ENCODE measurements at regions of chr4 and their contacts with region 1.

Region 1: GRCh38 chr4:102826890-102827673 is at the start of gene UBE2D3:
- DNase-seq: peak; percentile 95
- H3K4me3 Mint-ChIP-seq: no peak within 1 kb of the TSS
- H3K27ac Mint-ChIP-seq: no peak within 1 kb of the TSS
- H3K4me1 Mint-ChIP-seq: peaks cover 27% of the 10 kb centered on the region
- H3K27me3 Mint-ChIP-seq: no peaks in the 10 kb centered on the region
- total RNA-seq, gene UBE2D3: 447 to 450 TPM

Region 2: DNA sequence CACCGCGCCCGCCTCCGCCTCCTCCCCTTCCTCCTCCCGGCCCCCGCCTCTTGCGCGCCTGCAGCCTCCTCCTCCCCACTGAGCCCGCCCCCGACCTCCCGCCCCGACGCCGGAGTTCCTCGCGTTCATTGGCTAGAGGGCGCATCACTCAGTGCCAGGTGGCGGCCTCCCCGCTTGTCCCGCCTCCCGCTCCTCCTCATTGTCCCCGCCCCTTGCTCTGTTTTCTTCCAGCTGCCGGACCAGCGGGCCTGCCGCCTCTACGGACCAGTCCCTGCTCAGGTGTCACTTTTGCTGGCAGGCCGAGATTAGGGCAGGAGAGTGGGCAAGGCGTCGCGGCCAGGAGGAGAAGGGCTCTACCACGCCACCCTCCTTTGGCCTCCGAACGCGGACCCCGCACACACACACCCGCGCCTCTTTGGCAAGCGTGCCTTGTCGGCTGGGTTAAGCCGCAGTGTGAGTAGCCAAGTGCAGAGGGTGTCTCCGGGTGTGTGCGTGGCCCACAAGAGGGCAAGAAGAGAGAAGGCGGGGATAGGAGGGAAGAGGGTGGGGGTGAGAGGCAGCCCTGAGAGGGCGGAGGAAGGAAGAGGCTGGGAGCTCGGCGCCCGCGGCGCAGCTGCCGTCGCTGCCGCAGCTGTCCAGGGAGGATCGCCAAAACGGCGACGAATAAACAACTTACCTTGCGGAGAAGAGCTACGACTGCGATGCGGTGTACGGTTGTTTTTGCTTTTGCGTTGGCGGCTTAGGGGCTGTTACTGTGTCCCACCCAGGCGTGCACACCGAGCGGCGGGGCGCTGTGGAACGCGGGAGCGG is 1479.3 kb before region 1 on chr4:
- CTCF ChIA-PET with region 1: no interaction called
- intact Hi-C with region 1: loop called (anchors 5 kb)
- DNase-seq: peak; percentile 99
- H3K4me3 Mint-ChIP-seq: peak overlapping the region; percentile 95
- H3K27ac Mint-ChIP-seq: peak overlapping the region; percentile 82
- H3K4me1 Mint-ChIP-seq: peaks cover 22% of the 10 kb centered on the region
- H3K27me3 Mint-ChIP-seq: peaks cover 31% of the 10 kb centered on the region

Region 3: DNA sequence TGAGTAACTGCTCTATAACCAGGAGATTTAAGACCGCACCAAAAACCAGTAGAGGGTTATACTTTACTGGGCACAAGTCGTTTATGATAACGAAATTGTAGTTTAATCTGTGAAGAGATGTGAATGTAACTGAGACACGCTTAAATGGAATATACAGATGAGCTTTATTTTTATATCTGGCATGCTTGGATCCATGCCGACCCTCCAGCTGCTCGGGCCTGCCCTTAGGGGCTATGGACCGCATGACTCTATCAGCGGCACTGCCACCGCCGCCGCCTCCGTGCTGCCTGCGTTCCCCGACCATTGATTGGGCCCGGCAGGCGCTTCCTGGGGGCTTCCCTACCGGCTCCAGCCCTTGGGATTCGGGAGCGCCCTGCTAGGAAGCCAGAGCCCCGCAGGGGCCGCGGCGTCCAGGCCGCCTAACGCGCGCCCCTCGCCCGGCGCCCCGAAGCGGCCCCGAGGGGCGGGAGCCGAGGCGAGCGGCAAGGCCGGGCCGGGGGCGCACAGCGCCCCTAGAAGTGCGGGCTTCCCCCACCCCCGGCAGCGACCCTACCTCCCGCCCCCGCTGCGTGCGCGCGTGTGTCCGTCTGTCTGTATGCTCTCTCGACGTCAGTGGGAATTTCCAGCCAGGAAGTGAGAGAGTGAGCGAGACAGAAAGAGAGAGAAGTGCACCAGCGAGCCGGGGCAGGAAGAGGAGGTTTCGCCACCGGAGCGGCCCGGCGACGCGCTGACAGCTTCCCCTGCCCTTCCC is 326.2 kb before region 1 on chr4 and contains the start of gene NFKB1:
- CTCF ChIA-PET with region 1: no interaction called
- intact Hi-C with region 1: loop called (anchors 1 kb)
- DNase-seq: peak; percentile 90
- H3K4me3 Mint-ChIP-seq: peak within 1 kb of the TSS; percentile 96
- H3K27ac Mint-ChIP-seq: peak within 1 kb of the TSS; percentile 96
- H3K4me1 Mint-ChIP-seq: peaks cover 16% of the 10 kb centered on the region
- H3K27me3 Mint-ChIP-seq: no peaks in the 10 kb centered on the region
- total RNA-seq, gene NFKB1: 121 to 134 TPM

Region 4: GRCh38 chr4:102760645-102761295 is 66.3 kb before region 1 on chr4 and contains the start of gene MANBA:
- CTCF ChIA-PET with region 1: interaction called, 4 read pairs
- intact Hi-C with region 1: loop called (anchors 1 kb)
- DNase-seq: peak; percentile 89
- H3K4me3 Mint-ChIP-seq: peak within 1 kb of the TSS; percentile 88
- H3K27ac Mint-ChIP-seq: peak within 1 kb of the TSS; percentile 36
- H3K4me1 Mint-ChIP-seq: peaks cover 27% of the 10 kb centered on the region
- H3K27me3 Mint-ChIP-seq: no peaks in the 10 kb centered on the region
- total RNA-seq, gene MANBA: 9.8 to 11.0 TPM

Region 5: DNA sequence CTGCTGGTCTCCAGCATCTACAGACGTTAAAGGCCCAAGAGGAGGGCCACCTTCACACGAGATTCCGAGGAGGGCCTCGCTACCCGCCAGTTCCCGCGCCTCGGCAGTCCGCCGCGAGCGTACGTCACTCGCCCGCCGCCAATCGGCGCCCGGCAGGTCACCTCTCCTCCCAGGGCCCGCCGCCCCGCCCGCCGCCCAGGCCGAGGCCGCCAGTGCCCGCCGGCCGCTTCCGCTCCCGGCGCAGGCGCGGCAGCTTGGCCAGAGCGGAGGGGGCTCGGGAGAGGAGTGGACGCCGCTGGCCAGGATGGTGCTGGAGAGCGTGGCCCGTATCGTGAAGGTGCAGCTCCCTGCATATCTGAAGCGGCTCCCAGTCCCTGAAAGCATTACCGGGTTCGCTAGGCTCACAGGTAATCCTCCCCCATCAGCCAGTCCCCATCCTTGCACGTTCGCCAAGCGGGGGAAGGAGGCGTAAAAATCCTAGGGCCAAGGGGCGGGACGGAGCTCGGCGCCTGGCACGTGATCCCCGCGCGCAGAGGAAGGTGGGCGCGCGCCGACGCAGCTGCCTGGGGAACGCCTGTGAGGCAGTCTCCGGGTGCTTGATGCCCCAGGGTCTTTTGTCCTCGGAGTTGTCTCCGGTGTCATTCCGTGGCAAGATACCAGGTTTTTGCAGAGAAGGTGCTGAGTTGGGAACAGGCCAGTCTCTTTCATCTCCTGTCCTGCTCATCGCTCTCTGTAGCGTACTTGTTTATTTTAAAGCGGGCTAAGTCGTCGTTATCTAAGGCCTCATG is 41.9 kb after region 1 on chr4 and contains the start of gene CISD2:
- CTCF ChIA-PET with region 1: interaction called, 5 read pairs
- intact Hi-C with region 1: loop called (anchors 1 kb)
- DNase-seq: peak; percentile 95
- H3K4me3 Mint-ChIP-seq: peak within 1 kb of the TSS; percentile 94
- H3K27ac Mint-ChIP-seq: peak within 1 kb of the TSS; percentile 97
- H3K4me1 Mint-ChIP-seq: peaks cover 51% of the 10 kb centered on the region
- H3K27me3 Mint-ChIP-seq: no peaks in the 10 kb centered on the region
- total RNA-seq, gene CISD2: 25.1 to 25.7 TPM

Region 6: GRCh38 chr4:103019308-103020124 is 192.4 kb after region 1 on chr4 and contains the start of gene SLC9B1:
- CTCF ChIA-PET with region 1: interaction called, 3 read pairs
- intact Hi-C with region 1: loop called (anchors 1 kb)
- DNase-seq: peak; percentile 96
- H3K4me3 Mint-ChIP-seq: peak within 1 kb of the TSS; percentile 96
- H3K27ac Mint-ChIP-seq: peak within 1 kb of the TSS; percentile 97
- H3K4me1 Mint-ChIP-seq: peaks cover 20% of the 10 kb centered on the region
- H3K27me3 Mint-ChIP-seq: no peaks in the 10 kb centered on the region
- total RNA-seq, gene SLC9B1: 2.0 to 3.5 TPM

Region 7: GRCh38 chr4:103198111-103198765 is 371.2 kb after region 1 on chr4 and contains the start of gene CENPE:
- CTCF ChIA-PET with region 1: no interaction called
- intact Hi-C with region 1: loop called (anchors 1 kb)
- DNase-seq: peak; percentile 89
- H3K4me3 Mint-ChIP-seq: peak within 1 kb of the TSS; percentile 87
- H3K27ac Mint-ChIP-seq: peak within 1 kb of the TSS; percentile 89
- H3K4me1 Mint-ChIP-seq: peaks cover 7% of the 10 kb centered on the region
- H3K27me3 Mint-ChIP-seq: peaks cover 3% of the 10 kb centered on the region
- total RNA-seq, gene CENPE: 38.1 to 45.2 TPM